ENCODE measurements at regions of chr17 and their contacts with region 1.

Region 1: GRCh38 chr17:77963441-77963840 is 4.9 kb downstream of the TNRC6C start:
- DNase-seq: peak; percentile 17 to 80 (median 43)
- ATAC-seq: peak; percentile 85
- H3K4me3 ChIP-seq: no peak overlapping the region
- H3K27ac ChIP-seq: no peak overlapping the region
- H3K4me1 ChIP-seq: peaks cover 11 to 14% of the 10 kb centered on the region in 2 experiments; a peak in 4 of 5 replicates
- H3K27me3 ChIP-seq: no peaks in the 10 kb centered on the region
- CTCF ChIP-seq: no peak
- EP300 ChIP-seq: no peak
- POLR2A ChIP-seq: no peak
- RAD21 ChIP-seq: no peak

Region 2: GRCh38 chr17:77793971-77794235 is 169.5 kb before region 1 on chr17:
- CTCF ChIA-PET with region 1: no interaction called
- POLR2A ChIA-PET with region 1: no interaction called
- in situ Hi-C with region 1: no loop called
- intact Hi-C with region 1: no loop called
- DNase-seq: no peak
- ATAC-seq: no peak
- H3K4me3 ChIP-seq: no peak overlapping the region
- H3K27ac ChIP-seq: no peak overlapping the region
- H3K4me1 ChIP-seq: no peaks in the 10 kb centered on the region
- H3K27me3 ChIP-seq: peaks cover 59 to 82% of the 10 kb centered on the region in 2 experiments
- CTCF ChIP-seq: no peak
- EP300 ChIP-seq: no peak
- POLR2A ChIP-seq: no peak
- RAD21 ChIP-seq: no peak

Region 3: GRCh38 chr17:77974396-77974795 is 11.0 kb after region 1 on chr17:
- CTCF ChIA-PET with region 1: no interaction called
- POLR2A ChIA-PET with region 1: interaction called, 12 read pairs
- in situ Hi-C with region 1: no loop called
- intact Hi-C with region 1: no loop called
- DNase-seq: no peak
- ATAC-seq: no peak
- H3K4me3 ChIP-seq: no peak overlapping the region
- H3K27ac ChIP-seq: no peak overlapping the region
- H3K4me1 ChIP-seq: no peaks in the 10 kb centered on the region
- H3K27me3 ChIP-seq: no peaks in the 10 kb centered on the region
- CTCF ChIP-seq: no peak
- EP300 ChIP-seq: no peak
- POLR2A ChIP-seq: no peak
- RAD21 ChIP-seq: no peak

Measured in K562 (cell line).